Tibial artery (tissue), 4 donors: ENCODE measurements at regions of chr2 and their contacts with region 1.

Region 1: DNA sequence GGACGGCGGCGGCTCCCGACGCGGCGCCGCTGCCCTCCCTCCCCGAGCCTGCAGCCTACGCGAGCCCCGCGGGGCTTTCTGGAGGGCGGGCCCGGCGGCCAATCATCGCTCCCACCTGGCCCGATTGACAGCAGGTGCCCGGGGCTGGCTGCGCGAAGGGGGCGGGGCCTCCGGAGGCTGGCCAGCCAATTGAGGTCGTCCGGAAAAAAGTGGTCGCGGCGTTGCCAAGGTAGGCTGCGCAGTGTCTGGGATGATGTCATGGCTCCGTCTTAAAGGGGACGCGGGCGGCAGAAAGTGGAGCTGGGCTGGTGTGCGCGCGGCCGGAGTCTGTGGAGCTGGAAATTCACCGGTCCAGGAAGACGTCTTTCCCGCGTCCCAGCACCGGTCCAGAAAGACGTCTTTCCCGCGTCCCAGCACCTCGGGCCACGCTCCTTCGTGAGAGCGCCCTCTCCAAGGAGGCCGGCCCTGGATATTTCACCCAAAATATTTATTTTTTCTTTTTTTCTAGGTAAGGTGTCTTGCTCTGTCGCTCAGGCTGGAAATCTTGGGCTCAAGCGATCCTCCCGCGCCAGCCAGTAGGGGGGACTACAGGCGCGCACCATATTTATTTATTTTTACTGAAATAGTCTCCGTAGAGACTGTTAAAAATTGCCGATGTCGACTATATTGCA is at the start of gene ACTR1B:
- DNase-seq: peak; percentile 97 to 99
- H3K4me3 ChIP-seq: peak within 1 kb of the TSS; percentile 68 to 77
- H3K27ac ChIP-seq: peak within 1 kb of the TSS; percentile 89 to 93
- H3K4me1 ChIP-seq: peaks cover 0 to 33% (median 27%) of the 10 kb centered on the region in 4 donors
- H3K27me3 ChIP-seq: no peaks in the 10 kb centered on the region
- CTCF ChIP-seq: peak; percentile 47 to 53

Region 2: GRCh38 chr2:97617911-97618310 is 46.2 kb before region 1 on chr2:
- intact Hi-C with region 1: no loop called
- DNase-seq: no peak
- H3K4me3 ChIP-seq: no peak overlapping the region
- H3K27ac ChIP-seq: no peak overlapping the region
- H3K4me1 ChIP-seq: no peaks in the 10 kb centered on the region
- H3K27me3 ChIP-seq: no peaks in the 10 kb centered on the region
- CTCF ChIP-seq: no peak

Region 3: DNA sequence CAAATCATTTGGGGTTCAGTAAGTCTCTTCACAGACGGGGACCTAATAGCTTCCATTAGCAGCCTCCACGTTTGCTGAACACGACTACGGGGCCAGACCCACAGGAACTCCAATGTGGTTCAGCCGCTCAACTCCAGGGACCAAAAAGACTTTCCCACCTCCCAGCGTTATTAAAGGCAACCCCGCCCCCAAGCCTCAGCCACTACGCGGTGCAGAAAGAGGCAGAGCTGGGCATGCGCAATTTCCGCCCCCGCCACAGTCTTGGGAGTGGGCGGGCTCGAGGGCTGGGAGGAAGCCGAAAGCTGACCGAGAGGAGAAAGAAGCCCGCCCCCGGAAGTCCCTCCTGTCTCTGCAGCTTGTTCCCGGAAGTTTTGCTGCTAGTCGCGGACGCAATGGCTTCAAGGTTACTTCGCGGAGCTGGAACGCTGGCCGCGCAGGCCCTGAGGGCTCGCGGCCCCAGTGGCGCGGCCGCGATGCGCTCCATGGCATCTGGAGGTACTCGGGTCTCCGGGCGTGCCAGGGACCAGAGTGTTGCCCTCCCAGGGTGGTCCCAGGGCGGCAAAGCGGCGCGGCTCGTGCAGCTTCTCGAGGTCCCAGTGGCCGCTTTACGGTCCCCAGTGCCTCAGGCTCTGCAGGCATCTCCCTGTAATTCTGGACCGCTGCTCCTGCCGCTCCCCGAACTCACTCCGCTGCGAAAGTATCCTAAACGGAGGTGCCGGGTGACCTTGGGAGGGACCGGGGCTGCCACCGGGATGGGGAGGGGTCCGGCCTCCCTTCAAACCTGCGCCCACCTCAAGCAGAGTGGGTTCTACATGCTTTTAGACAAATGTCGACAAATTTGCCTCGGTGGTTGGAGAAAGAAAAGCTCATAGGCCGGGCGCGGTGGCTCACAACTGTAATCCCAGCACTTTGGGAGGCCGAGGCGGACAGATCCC is 18.1 kb before region 1 on chr2 and contains the start of gene COX5B:
- intact Hi-C with region 1: loop called (anchors 2 kb)
- DNase-seq: peak; percentile 99
- H3K4me3 ChIP-seq: peak within 1 kb of the TSS; percentile 98 to 99
- H3K27ac ChIP-seq: peak within 1 kb of the TSS; percentile 88 to 94
- H3K4me1 ChIP-seq: peaks cover 0 to 17% (median 14%) of the 10 kb centered on the region in 4 donors
- H3K27me3 ChIP-seq: no peaks in the 10 kb centered on the region
- CTCF ChIP-seq: peak in 1 of 2 experiments; percentile 19

Region 4: GRCh38 chr2:97858442-97858841 is 194.3 kb after region 1 on chr2:
- intact Hi-C with region 1: no loop called
- DNase-seq: no peak
- H3K4me3 ChIP-seq: no peak overlapping the region
- H3K27ac ChIP-seq: no peak overlapping the region
- H3K4me1 ChIP-seq: no peaks in the 10 kb centered on the region
- H3K27me3 ChIP-seq: no peaks in the 10 kb centered on the region
- CTCF ChIP-seq: no peak

Region 5: GRCh38 chr2:98356729-98357128 is 692.6 kb after region 1 on chr2:
- intact Hi-C with region 1: no loop called
- DNase-seq: no peak
- H3K4me3 ChIP-seq: no peak overlapping the region
- H3K27ac ChIP-seq: no peak overlapping the region
- H3K4me1 ChIP-seq: no peaks in the 10 kb centered on the region
- H3K27me3 ChIP-seq: peaks cover 0 to 6% of the 10 kb centered on the region in 2 donors
- CTCF ChIP-seq: no peak